Adrenal gland (tissue), 19 donors: ENCODE measurements at regions of chr3 and their contacts with region 1.

Region 1: DNA sequence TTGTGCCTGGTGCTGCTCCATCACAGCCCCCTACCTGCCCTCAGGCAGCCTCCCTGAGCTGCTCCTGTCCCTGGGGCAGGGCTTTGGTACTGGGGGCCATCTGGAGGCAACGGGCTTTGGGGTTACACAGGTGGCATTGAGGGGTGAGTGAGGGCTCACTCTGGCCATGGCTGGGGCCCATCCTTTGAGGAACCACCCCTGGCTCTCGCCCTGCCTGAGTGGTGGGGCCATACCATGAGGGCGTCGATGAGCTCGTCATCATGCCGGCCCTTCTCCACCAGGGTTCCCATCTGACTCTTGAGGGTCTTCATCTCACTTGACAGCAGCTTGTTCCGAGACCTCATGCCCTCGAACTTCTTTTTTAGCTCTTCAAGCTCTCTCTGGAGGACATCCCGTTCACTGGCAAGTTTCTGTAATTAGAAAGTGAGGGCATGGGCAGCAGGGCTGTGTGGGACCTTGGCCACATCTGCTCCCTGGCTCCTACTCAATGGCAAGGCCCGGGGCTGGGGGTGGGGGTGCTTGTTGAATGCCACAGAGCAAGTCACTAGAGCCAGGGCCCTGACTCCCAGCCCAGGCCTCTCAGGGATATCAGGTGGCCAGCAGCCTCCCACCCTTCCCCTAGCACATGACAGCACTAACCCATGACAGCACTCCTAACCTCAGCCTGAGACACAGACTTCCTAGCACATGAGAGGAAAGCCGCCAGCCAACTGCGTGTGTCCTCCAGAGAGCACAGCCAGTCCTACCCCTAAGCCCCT is 33.5 kb downstream of the CCDC13 start:
- DNase-seq: peak in 6 of 7 donors; percentile 27 to 71 (median 64)
- H3K4me3 ChIP-seq: no peak overlapping the region
- H3K27ac ChIP-seq: no peak overlapping the region
- H3K4me1 ChIP-seq: no peaks in the 10 kb centered on the region
- H3K27me3 ChIP-seq: no peaks in the 10 kb centered on the region
- CTCF ChIP-seq: no peak
- POLR2A ChIP-seq: no peak

Region 2: DNA sequence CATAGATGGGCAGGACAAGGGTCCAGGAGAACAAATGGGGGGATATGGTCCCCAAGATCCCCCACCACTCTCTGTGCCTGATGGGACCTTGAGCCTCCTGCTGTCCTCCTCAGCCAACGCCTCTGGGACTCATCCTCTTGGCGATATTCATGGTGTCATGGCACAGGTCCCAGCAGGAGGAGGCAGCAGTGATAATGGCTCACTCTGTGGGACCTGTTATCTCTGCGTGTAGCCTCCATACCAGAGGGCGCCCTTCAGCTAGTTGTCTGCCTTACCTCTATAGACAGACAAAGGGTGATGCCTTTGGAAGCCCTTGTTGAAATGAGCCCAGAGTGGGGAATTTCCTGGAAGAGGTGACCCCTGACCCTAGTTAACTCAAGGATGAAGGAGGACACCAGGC is 78.7 kb before region 1 on chr3:
- intact Hi-C with region 1: loop called in 1 of 2 experiments (anchors 5 kb)
- DNase-seq: peak; percentile 36 to 79 (median 70)
- H3K4me3 ChIP-seq: no peak overlapping the region
- H3K27ac ChIP-seq: peak overlapping the region in 1 of 5 donors; percentile 41
- H3K4me1 ChIP-seq: peaks cover 7 to 18% of the 10 kb centered on the region in 2 donors
- H3K27me3 ChIP-seq: no peaks in the 10 kb centered on the region
- CTCF ChIP-seq: peak in 1 of 6 experiments; percentile 28
- POLR2A ChIP-seq: no peak